PC-3 (cell line): ENCODE measurements at regions of chr3 and their contacts with region 1.

Region 1: GRCh38 chr3:190701096-190701532 is 161.4 kb downstream of the GMNC start:
- DNase-seq: peak; percentile 87
- ATAC-seq: peak; percentile 93
- H3K4me3 ChIP-seq: no peak overlapping the region
- H3K27ac ChIP-seq: no peak overlapping the region
- H3K4me1 ChIP-seq: peaks cover 19% of the 10 kb centered on the region
- H3K27me3 ChIP-seq: no peaks in the 10 kb centered on the region
- CTCF ChIP-seq: peak; percentile 95

Region 2: DNA sequence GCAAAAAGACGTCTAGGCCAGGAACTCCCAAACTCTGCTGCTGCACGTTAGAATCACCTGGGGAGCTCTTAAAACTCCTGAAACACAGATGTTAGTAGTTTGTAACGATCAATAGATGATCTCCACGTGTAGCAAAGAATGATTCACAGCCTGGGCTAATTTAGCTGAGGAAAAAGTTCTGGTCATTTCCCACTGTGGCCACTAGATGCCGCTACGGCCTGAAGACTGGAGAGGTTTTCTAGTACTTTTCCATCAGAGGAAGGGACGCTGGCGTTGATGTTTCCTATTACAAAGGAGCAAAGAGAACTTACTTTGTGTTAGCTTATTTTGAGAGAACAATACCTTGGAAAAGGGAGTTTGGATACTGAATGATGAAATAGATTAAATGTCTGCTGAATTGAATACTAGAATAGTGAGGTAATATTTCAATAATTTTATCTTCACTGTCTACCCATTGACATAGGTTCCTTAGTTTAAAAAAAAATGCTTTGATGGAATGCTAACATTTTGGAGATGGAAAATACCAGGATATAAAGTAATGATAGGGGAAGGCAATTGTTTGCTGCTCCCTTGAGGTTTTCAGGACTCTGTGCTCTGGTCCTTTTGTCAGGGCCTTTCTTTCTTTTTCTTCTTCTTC is 739.5 kb before region 1 on chr3:
- CTCF ChIA-PET with region 1: no interaction called
- POLR2A ChIA-PET with region 1: interaction called, 3 read pairs
- intact Hi-C with region 1: loop called (anchors 1 kb)
- DNase-seq: peak; percentile 95
- ATAC-seq: peak; percentile 82
- H3K4me3 ChIP-seq: no peak overlapping the region
- H3K27ac ChIP-seq: no peak overlapping the region
- H3K4me1 ChIP-seq: peaks cover 4% of the 10 kb centered on the region; the same call in 1 of the 2 replicates
- H3K27me3 ChIP-seq: no peaks in the 10 kb centered on the region
- CTCF ChIP-seq: peak; percentile 95

Region 3: DNA sequence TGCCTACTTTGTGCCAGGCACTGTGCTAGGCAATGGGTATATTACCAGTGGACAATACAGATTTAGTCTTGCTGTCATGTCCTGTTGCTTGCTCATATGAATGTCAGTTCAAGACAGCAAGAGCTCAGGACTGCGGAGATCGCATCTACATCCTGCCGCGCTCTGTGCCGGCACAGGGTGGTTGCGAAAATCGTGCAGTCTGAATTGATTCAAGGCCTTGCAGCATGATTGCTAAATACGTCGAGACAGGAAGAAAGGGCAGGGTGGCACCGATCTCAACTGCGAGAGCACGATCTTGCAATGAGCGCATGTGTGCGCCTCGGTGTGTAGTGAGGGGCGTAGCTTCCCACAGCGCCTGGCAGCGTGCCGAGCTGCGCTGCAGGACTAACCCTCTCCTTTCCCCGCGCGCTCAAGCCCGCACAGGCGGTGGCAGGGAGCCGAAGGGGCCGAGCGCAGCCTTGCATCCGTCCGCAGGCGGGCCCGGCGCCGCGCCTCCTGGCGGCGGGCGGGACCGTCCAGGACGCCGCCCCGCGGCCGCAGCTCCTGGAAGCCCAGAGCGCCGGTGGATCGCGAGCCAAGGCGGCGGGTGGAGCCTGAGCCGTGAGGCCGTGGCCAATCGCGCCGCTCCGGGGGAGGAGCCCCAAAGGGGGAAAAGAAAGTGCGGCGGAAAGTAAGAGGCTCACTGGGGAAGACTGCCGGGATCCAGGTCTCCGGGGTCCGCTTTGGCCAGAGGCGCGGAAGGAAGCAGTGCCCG is 187.5 kb before region 1 on chr3 and contains the start of gene IL1RAP:
- CTCF ChIA-PET with region 1: interaction called, 8 read pairs
- POLR2A ChIA-PET with region 1: no interaction called
- intact Hi-C with region 1: loop called (anchors 1 kb)
- DNase-seq: peak; percentile 96
- ATAC-seq: peak; percentile 91
- H3K4me3 ChIP-seq: peak within 1 kb of the TSS; percentile 95
- H3K27ac ChIP-seq: peak within 1 kb of the TSS; percentile 24
- H3K4me1 ChIP-seq: peaks cover 40% of the 10 kb centered on the region
- H3K27me3 ChIP-seq: no peaks in the 10 kb centered on the region
- CTCF ChIP-seq: peak; percentile 65
- total RNA-seq, gene IL1RAP: 5.0 and 13.4 TPM in 2 replicates

Region 4: DNA sequence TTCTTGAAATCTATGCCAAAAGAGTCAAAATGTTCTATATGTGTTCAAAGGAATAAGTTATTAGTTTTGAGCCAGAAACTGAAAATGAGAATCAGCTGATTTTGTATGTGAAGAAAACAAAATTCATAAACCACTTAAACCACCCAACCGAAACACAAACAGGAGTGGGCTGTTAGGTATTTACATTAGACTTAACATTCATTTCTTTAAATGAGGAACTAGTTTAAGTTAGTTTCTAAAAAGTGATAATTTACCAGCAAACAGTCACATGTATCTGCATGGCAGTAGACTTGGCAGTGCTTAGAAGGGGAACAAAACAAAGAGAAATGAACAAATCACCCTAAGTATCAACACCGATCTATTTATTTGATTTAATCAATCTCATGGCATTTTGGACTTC is 33.4 kb after region 1 on chr3:
- CTCF ChIA-PET with region 1: no interaction called
- POLR2A ChIA-PET with region 1: no interaction called
- intact Hi-C with region 1: no loop called
- DNase-seq: no peak
- ATAC-seq: no peak
- H3K4me3 ChIP-seq: no peak overlapping the region
- H3K27ac ChIP-seq: no peak overlapping the region
- H3K4me1 ChIP-seq: no peaks in the 10 kb centered on the region
- H3K27me3 ChIP-seq: no peaks in the 10 kb centered on the region
- CTCF ChIP-seq: no peak

Region 5: DNA sequence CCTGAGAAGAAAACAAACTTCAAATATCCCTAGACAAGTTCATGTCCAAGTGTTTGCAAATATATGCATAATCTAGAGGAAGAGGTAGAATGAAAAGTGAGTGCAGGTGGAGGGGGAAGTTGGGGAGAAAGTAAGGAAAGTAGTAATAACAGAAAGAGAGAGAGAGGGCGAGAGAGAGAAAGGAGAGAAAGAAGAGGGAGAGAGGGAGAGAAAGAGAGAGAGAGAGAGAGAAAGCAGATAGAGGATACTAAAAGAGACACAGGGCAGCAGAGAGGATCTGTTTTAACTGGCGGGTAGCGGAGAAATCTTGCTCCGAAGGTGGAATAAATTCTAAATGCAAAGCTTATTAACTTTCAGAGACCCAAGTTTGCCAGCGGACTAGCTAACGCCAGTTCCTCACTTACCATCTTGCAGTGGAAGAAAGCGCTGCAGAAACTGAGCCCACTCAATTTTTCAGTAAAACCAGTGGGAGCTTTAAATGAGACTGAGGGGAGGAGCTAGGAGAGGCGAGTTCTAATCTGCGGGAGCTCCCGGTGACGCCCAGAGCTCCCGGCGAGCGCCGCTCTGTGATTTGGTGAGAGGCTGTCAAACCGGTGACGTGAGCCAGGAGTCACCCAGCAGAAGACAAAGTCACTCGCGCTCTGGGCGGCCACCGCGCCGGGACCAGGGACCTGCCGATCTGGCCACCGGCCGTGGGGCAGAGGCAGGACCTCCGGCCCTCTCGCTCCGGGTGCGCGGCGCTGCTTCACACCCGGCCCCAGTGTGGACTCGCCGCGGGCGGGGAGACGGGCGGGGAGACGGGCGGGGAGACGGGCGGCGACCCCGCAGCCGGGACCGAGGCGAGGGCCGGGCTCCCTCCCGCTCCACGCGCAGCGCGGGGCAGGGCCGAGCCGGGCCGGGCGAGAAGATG is 161.3 kb after region 1 on chr3 and contains the start of gene GMNC:
- CTCF ChIA-PET with region 1: interaction called, 8 read pairs
- POLR2A ChIA-PET with region 1: no interaction called
- intact Hi-C with region 1: loop called (anchors 1 kb)
- DNase-seq: peak; percentile 85
- ATAC-seq: peak; percentile 98
- H3K4me3 ChIP-seq: peak within 1 kb of the TSS; percentile 89
- H3K27ac ChIP-seq: no peak within 1 kb of the TSS
- H3K4me1 ChIP-seq: no peaks in the 10 kb centered on the region
- H3K27me3 ChIP-seq: no peaks in the 10 kb centered on the region
- CTCF ChIP-seq: no peak
- total RNA-seq, gene GMNC: 0.06 TPM in 1 of 2 replicates, not detected in the other

Region 6: GRCh38 chr3:191051037-191051436 is 349.9 kb after region 1 on chr3:
- CTCF ChIA-PET with region 1: interaction called, 15 read pairs
- POLR2A ChIA-PET with region 1: interaction called, 3 read pairs
- intact Hi-C with region 1: loop called (anchors 1 kb)
- DNase-seq: peak; percentile 78
- ATAC-seq: peak; percentile 78
- H3K4me3 ChIP-seq: no peak overlapping the region
- H3K27ac ChIP-seq: no peak overlapping the region
- H3K4me1 ChIP-seq: no peaks in the 10 kb centered on the region
- H3K27me3 ChIP-seq: no peaks in the 10 kb centered on the region
- CTCF ChIP-seq: peak; percentile 71